ENCODE measurements at regions of chr6 and their contacts with region 1.

Region 1: GRCh38 chr6:36926708-36927513 is 27.6 kb upstream of the PI16 start:
- DNase-seq: no peak
- ATAC-seq: no peak
- H3K4me3 ChIP-seq: no peak overlapping the region
- H3K27ac ChIP-seq: no peak overlapping the region
- H3K4me1 ChIP-seq: peaks cover 11% of the 10 kb centered on the region
- H3K27me3 ChIP-seq: no peaks in the 10 kb centered on the region
- CTCF ChIP-seq: no peak

Region 2: DNA sequence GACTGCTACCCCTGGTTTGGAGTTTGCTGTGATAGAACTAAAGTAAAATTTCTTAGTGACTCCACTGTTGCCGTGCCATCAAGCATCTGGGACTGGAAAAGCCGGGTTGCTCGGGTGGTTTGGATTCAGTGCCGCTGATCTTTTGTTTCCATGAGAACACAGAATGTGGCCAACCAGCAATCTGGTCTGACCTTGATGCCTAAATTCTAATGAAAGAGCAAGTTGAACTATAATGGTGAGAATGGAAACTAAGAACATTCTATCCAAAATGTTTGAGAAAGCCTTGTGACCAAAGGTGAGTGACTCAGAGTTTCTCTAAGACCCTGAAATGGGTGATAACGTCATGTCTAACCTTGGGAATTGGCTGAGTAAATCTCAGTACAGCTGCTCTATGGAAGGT is 17.7 kb after region 1 on chr6:
- CTCF ChIA-PET with region 1: no interaction called
- POLR2A ChIA-PET with region 1: no interaction called
- intact Hi-C with region 1: loop called (anchors 1 kb)
- DNase-seq: no peak
- ATAC-seq: no peak
- H3K4me3 ChIP-seq: no peak overlapping the region
- H3K27ac ChIP-seq: no peak overlapping the region
- H3K4me1 ChIP-seq: peaks cover 8% of the 10 kb centered on the region
- H3K27me3 ChIP-seq: no peaks in the 10 kb centered on the region
- CTCF ChIP-seq: no peak